ENCODE measurements at regions of chr2 and their contacts with region 1.

Region 1: DNA sequence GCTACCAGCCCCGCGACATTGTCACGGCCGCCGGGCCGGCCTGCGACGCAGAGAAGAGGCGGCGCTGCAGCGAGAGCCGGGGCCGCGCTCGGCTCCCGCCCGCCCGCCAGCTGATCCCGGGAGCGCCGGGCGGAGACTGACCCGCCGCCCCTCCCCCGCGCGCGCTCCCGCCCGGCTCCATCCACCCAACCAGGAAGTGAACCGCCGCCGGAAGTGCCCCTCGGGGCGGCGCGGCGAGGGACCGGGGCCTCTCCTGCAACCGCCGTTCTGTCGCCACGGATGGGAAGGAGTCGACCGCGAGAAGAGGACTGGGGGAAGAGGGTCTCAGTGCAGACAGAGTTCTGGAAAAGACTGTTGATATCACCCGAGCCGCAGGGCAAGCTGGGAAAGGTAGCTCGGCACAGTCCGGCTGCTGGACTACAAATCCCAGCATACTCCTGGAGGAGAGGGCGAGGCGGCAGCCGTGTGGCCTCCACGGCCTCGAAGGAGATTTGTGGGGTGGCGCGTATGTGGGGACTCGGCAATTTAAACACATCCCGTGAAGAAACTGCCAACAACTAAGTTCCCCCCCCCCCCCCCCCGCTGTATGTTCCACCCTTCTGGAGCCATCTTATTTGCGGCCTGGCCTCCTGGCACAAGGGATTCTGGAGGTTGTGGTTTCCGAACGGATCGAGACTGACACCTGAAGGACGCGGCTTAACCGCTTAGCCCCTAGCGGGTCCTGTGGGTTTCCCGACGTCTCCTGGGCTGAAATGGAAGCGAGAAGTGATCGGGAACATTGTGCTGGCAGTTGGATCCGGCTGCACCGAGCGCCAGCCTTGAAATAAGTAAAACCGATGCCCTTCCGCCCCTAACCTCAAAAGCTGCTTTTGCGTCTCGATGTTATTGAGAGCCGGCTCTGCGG is at the start of gene AAK1:
- DNase-seq: peak; percentile 89
- H3K4me3 Mint-ChIP-seq: peak within 1 kb of the TSS; percentile 90
- H3K27ac Mint-ChIP-seq: peak within 1 kb of the TSS; percentile 97
- H3K4me1 Mint-ChIP-seq: peaks cover 62% of the 10 kb centered on the region
- H3K27me3 Mint-ChIP-seq: no peaks in the 10 kb centered on the region

Region 2: DNA sequence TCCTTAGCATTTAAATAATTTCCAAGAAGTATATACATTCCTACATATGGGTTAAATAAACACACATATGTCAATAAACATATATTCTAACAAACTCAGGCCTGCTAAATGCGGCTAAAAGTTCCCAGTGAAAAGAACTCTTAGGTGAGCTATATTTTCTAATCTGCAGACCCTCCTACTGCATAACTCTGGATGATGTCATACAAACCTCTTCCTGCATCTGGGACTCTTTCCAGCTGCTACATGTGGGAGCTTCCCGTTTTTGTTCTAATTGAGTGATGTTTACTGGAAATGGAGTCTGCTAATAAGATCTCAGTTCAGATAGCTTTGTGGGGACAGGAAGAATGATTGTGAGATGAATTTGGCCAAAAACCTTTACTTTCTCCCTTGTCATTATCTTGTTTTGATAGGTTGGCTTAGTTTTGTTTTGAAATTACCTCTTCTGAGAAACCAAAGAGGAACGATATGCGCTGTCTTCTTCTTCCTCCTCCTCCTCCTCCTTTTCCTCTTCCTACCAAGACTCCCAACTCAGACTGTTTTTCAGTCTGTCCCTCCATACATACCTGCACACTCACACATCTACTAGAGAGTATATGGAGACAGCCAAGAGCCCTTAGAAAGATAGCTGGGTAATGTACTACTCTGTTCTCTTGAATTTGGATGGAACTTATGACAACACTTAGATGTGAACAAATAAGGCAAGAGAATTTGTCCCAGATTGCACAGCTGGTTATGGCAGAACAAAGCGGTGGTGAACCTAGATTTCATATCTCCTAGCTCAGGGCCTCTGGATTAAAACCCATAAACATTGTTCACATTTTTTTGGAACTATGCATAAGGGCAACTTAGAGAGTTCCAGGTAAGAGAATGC is 39.5 kb after region 1 on chr2:
- CTCF ChIA-PET with region 1: interaction called, 14 read pairs
- DNase-seq: no peak
- H3K4me3 Mint-ChIP-seq: peak overlapping the region; percentile 11
- H3K27ac Mint-ChIP-seq: peak overlapping the region; percentile 84
- H3K4me1 Mint-ChIP-seq: peaks cover 55% of the 10 kb centered on the region
- H3K27me3 Mint-ChIP-seq: peaks cover 3% of the 10 kb centered on the region

Region 3: GRCh38 chr2:69716555-69717114 is 72.8 kb after region 1 on chr2:
- CTCF ChIA-PET with region 1: interaction called, 25 read pairs
- DNase-seq: no peak
- H3K4me3 Mint-ChIP-seq: no peak overlapping the region
- H3K27ac Mint-ChIP-seq: no peak overlapping the region
- H3K4me1 Mint-ChIP-seq: peaks cover 9% of the 10 kb centered on the region
- H3K27me3 Mint-ChIP-seq: peaks cover 8% of the 10 kb centered on the region

Measured in activated naive CD4-positive, alpha-beta T cell treated with anti-CD3 and anti-CD28 coated beads, Interleukin-2, amount 10 ng/mL, durations not matched to agents 7 days and 5 days (primary cell).